BJ (cell line): ENCODE measurements at regions of chr10 and their contacts with region 1.

Region 1: DNA sequence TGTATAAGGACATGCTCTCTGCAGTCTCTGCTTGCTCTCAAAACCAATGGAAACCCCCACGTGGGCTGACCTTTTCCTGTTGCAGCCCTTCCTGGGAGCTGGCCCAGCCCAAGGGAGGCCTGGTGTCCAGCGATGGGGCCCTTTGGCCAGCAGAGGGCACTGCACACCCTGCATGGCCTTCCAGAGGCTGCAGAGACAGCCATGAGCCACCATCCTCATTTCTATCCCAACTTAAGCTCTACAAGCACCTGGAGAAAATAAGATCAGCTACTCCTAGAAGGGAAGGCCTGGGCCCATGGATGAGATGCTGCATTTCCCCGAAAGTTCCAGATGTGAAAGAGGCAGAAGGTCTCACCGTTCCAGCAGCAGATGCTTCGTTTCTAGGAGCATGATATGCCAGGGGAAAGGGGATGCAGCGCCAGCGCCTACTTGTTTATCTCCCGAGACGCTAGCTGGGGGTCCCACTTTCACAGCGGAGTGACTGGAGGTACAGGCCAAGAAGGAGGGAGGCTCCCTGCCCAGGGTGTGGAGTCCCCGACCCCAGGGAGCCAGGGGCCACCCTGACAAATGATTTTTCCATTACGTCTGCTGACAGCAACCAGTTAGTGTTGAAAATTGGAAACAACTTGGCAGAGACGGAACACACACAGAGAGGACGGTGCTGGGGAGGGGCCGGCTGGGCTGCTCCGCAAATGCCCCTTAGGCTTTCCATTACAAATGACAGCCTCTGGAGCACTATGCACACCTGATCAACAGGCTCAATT is 106.4 kb downstream of the ZRANB1 start:
- DNase-seq: no peak
- H3K4me3 ChIP-seq: no peak overlapping the region
- H3K27me3 ChIP-seq: no peaks in the 10 kb centered on the region
- CTCF ChIP-seq: peak; percentile 99

Region 2: DNA sequence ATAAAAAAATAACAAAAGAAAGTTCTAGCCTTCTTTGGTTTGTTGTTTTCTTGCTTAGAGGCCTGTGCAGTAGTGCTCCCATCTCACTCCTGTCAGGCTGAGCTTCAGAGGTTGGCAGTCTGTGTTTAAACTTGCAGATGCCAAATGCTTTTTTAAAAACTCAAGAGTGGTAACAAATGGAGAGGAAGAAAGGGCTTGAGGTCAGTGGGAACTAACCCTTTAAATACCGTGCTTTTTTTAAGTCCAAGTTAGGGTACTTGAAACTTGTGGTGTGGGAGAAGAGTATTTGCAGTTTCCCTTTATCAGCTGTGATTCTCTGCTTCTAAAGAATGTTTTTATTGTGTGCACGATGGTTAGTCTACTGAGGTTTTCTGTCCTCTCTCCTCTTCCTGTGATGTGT is 77.0 kb before region 1 on chr10:
- CTCF ChIA-PET with region 1: no interaction called
- POLR2A ChIA-PET with region 1: no interaction called
- DNase-seq: no peak
- H3K4me3 ChIP-seq: no peak overlapping the region
- H3K27me3 ChIP-seq: no peaks in the 10 kb centered on the region
- CTCF ChIP-seq: no peak

Region 3: DNA sequence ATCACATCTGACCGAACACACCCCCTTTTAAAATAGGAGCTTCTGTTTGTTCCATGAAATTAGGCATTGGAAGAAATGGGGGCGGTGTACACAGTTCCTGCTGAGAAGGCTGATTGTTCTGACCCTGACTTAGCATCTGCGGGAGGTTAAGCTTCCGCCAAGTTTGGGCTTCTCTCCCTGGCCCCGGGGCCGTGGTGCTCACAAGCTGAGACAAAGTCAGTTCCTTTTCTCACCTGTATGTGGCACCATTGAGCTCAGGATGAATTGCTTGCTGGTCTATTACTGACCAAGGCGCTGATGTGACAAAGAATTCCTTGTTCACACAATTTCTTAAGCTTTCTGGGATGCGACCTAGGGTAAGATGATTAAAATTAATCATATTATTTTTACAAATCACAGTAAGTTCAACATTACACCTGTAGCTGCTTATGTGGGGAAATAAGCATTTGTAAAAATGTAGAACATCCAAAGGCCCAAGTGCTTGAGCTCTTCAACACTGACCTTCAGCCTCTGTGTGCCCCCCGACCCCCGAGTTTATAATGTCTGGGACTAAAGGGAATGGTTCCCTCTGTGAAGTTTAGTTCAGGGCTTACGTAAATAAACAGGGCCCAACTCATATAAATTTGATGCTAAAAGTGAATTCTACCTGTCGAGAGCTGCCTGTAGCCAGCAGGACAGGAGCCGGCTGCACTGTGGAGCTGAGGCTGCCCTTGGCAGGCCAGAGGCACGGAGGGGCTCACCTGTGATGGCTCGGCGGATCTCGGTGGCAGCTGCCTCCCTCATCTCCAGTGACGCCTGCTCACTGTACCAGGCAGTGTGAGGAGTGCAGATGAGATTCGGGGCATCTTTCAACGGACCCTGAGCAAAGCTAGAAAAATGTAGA is 55.6 kb before region 1 on chr10:
- CTCF ChIA-PET with region 1: interaction called, 12 read pairs
- POLR2A ChIA-PET with region 1: no interaction called
- DNase-seq: no peak
- H3K4me3 ChIP-seq: no peak overlapping the region
- H3K27me3 ChIP-seq: no peaks in the 10 kb centered on the region
- CTCF ChIP-seq: peak; percentile 65

Region 4: DNA sequence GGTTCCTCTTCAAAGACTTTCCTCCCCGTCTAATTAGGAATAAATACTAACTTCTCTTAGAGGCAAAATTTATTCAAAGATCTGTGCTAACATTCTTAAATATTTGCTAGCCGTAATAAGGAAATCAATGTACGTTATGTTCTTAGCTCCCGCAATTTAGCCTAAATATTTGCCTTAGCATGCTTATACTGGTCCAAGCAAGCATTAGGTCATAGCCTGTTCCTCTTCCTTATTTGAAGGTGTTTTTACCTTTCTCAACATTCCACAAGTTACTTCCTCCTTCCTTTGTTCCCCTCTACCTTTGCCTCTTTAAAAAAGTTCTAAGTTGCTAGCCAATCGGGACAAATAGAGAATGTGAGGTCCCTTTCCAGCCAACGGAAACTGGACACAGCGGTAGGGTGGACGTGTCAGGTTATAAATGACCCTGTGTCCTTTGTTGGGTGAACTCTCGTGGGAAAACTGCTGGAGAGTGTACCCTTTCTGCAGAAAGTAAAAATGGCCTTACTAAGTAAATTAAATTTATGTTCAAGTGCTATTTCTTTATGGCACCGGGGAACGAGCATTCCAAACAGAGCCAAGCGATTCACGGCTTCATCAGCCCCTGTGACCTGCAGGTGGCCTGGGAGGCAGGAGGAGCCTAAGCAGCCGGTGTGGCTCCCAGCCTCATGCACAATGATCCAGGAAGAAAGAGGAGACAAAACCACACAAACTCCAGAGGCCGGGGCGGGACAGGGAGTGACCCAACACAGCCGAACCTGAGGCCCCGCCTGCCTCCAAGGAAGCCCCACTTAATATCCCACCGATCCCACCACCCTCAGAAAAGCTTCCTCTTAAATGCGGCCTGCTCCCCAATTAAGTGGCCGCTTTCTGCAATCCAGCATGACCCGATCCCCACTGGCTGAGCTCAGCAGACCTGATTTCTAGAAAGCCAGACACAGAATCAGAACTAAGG is 39.3 kb before region 1 on chr10:
- CTCF ChIA-PET with region 1: interaction called, 13 read pairs
- POLR2A ChIA-PET with region 1: no interaction called
- DNase-seq: no peak
- H3K4me3 ChIP-seq: no peak overlapping the region
- H3K27me3 ChIP-seq: no peaks in the 10 kb centered on the region
- CTCF ChIP-seq: no peak

Region 5: DNA sequence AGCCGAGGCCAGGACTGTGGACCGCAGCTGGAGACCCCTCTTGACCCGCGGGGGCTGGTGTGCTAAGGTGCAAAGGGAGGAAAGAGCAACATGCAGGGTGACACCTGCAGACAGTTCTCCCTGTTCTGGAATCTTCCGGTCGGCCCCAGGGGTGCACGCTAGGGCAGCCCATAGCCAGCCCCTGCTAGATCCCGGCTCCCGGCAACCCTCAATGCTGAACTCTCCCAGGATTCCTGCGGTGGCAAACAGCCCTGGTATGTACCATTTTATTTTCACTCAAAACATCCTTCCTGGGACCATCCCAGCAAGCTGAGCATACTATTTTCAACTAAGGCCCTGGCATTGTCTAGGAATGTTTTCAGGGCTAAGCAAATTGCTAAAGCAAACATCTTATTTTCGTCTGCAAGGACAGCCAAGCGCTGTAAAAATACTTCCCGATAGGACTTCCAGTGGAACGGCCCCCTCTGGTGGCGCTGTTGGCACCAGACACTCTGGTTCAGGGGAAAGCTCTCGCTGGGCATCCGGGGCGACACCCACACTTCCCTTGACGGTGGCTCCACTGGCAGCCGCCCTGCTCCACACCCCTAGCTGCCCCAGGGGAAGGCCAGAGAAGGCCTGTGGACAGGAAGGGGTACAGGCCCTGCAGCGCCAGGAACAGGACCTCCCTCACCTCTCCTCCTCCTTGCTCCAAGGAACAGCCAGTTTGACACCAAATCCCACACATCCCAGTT is 12.7 kb after region 1 on chr10:
- CTCF ChIA-PET with region 1: interaction called, 123 read pairs
- POLR2A ChIA-PET with region 1: interaction called, 5 read pairs
- DNase-seq: peak; percentile 73
- H3K4me3 ChIP-seq: no peak overlapping the region
- H3K27me3 ChIP-seq: no peaks in the 10 kb centered on the region
- CTCF ChIP-seq: peak; percentile 89

Region 6: GRCh38 chr10:125343118-125343925 is 295.0 kb after region 1 on chr10:
- CTCF ChIA-PET with region 1: interaction called, 13 read pairs
- POLR2A ChIA-PET with region 1: no interaction called
- DNase-seq: no peak
- H3K4me3 ChIP-seq: no peak overlapping the region
- H3K27me3 ChIP-seq: no peaks in the 10 kb centered on the region; the same call in 1 of the 2 replicates
- CTCF ChIP-seq: peak; percentile 73